ENCODE measurements at regions of chr18 and their contacts with region 1.

Region 1: GRCh38 chr18:53319628-53320027 is 904.8 kb downstream of the MBD2 start:
- DNase-seq: no peak
- H3K4me3 ChIP-seq: no peak overlapping the region
- H3K27ac ChIP-seq: no peak overlapping the region
- H3K4me1 ChIP-seq: no peaks in the 10 kb centered on the region
- H3K27me3 ChIP-seq: no peaks in the 10 kb centered on the region
- CTCF ChIP-seq: no peak

Region 2: DNA sequence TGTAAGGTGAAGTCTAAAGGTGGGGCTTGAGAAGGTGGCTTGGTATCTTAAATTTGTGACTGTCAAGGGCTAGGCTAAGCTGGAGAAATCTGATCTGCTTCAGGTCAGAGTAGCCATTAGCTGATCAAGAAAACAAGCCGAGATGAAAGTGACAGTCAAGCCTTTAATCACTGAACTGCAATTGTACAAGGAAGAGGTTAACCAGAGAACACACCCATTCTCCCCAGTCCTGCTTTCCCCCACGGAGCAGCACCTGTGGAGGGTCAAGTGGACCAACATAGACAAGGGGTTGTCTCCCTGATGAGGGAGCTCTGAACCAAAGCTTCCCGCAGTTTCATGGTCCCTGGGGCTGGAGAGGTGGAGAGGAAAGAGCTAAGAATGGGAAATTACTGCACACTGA is 78.5 kb before region 1 on chr18:
- CTCF ChIA-PET with region 1: no interaction called
- dilution Hi-C with region 1: no loop called
- in situ Hi-C with region 1: no loop called
- intact Hi-C with region 1: no loop called
- DNase-seq: no peak
- H3K4me3 ChIP-seq: no peak overlapping the region
- H3K27ac ChIP-seq: no peak overlapping the region
- H3K4me1 ChIP-seq: no peaks in the 10 kb centered on the region
- H3K27me3 ChIP-seq: no peaks in the 10 kb centered on the region
- CTCF ChIP-seq: no peak

Region 3: DNA sequence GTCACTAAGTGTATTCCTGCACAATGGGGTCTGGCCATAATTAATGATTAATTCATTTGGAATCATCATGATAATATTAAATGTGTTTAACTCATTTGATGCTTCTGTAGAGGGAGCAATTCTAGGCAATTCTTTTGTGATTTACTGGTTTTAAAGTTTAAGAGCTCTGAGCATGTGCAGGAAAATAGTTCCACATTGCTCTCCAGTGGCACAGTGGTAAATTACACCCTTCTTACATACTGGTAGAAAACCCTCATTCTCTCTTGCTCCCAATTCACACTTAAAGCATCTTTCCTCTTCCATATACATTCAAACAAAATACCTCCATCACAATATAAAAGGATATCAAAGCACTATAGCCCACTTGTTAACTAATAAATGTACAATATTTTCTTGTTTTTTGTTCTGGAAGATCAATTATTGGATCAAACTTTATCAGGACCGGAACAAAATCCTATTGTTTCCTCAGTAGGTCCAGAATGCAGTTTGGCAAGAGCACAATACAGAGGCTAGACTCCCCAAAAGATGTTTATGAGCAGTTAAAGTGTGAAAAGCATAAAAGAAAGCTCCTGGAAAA is 60.5 kb after region 1 on chr18:
- CTCF ChIA-PET with region 1: no interaction called
- dilution Hi-C with region 1: loop called (anchors 10 kb)
- in situ Hi-C with region 1: no loop called
- intact Hi-C with region 1: no loop called
- DNase-seq: peak; percentile 14
- H3K4me3 ChIP-seq: no peak overlapping the region
- H3K27ac ChIP-seq: no peak overlapping the region
- H3K4me1 ChIP-seq: no peaks in the 10 kb centered on the region
- H3K27me3 ChIP-seq: no peaks in the 10 kb centered on the region
- CTCF ChIP-seq: peak; percentile 51 to 52

Measured in mammary epithelial cell (primary cell).